ENCODE measurements at regions of chr5 and their contacts with region 1.

Region 1: GRCh38 chr5:158695595-158696330 is 404.0 kb downstream of the EBF1 start:
- DNase-seq: peak; percentile 76
- H3K4me3 ChIP-seq: no peak overlapping the region
- CTCF ChIP-seq: peak; percentile 95

Region 2: DNA sequence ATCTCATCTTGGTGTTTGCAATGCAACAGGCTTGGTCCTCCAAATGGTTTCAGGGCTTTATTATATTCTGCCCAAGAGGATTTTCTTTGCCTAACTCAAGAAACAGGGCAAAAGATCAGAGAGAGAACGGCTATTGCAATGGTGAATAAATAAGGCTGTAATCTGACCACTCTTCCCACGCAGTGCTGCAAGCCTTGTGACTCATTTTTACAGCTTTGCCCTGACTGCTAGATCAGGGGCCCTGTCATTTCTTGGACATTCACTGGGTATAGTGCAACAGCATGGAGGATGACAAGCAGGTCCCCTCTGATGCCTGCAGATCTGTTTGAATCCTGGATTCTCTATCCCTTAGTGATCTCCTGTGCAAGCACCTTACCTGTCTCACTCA is 55.2 kb before region 1 on chr5:
- in situ Hi-C with region 1: no loop called
- DNase-seq: no peak
- H3K4me3 ChIP-seq: no peak overlapping the region
- CTCF ChIP-seq: no peak

Region 3: GRCh38 chr5:158786390-158786789 is 90.6 kb after region 1 on chr5:
- in situ Hi-C with region 1: no loop called
- DNase-seq: no peak
- H3K4me3 ChIP-seq: no peak overlapping the region
- CTCF ChIP-seq: no peak

Region 4: DNA sequence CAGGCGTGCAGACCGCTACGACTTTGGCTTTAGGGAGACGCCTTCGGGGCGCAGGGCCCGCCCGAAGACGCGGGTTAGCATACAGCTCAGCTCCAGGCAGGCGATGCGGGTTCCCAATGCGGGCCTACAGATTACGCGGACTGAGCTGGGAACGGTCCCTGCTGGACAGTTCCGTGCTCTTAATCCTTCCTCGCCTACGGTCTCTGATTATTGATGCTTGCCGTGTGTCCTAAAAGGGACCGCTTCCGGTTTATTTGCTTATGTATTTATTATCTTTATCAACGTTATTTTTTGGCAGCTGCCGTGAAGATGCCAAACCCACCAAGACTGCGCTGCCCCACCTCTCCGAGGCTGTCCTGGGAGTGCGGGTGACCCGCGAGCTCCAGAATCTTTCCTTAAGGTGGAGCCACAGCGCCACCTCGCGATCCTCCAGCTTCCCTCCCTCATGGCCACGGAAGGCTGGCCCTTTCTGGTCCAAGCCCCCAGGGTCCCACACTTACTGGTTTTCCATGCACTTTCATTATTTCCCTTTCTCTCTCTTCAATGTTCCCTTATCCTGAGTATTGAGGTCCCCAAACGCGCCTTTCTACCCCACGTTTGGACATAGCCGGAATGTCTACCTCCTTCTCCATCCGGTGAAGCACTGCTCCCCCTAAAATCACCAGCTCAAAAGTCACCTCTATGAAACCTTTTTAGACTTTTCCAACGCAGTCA is 411.0 kb after region 1 on chr5:
- in situ Hi-C with region 1: loop called (anchors 25 kb)
- DNase-seq: peak; percentile 72
- H3K4me3 ChIP-seq: peak overlapping the region; percentile 21
- CTCF ChIP-seq: peak; percentile 90